Ovary (tissue), 10 donors: ENCODE measurements at regions of chr5 and their contacts with region 1.

Region 1: GRCh38 chr5:43556857-43557542 is at the start of gene PAIP1:
- DNase-seq: peak; percentile 76 to 87 (median 81)
- H3K4me3 ChIP-seq: peak within 1 kb of the TSS; percentile 88
- H3K27ac ChIP-seq: peak within 1 kb of the TSS; percentile 95 to 97
- H3K4me1 ChIP-seq: no peaks in the 10 kb centered on the region
- H3K27me3 ChIP-seq: no peaks in the 10 kb centered on the region
- CTCF ChIP-seq: peak; percentile 56 to 75 (median 74)
- EP300 ChIP-seq: no peak
- POLR2A ChIP-seq: peak; percentile 43
- total RNA-seq, gene PAIP1: 45.3 to 75.8 (median 61.6) TPM

Region 2: GRCh38 chr5:43484106-43484849 is 72.7 kb before region 1 on chr5:
- intact Hi-C with region 1: loop called in 1 of 4 experiments (anchors 5 kb)
- DNase-seq: peak; percentile 77 to 85 (median 82)
- H3K4me3 ChIP-seq: peak overlapping the region; percentile 83
- H3K27ac ChIP-seq: peak overlapping the region; percentile 88 to 94
- H3K4me1 ChIP-seq: peaks cover 3% of the 10 kb centered on the region
- H3K27me3 ChIP-seq: no peaks in the 10 kb centered on the region
- CTCF ChIP-seq: peak; percentile 62 to 69 (median 65)
- EP300 ChIP-seq: no peak
- POLR2A ChIP-seq: no peak